Activated CD8-positive, alpha-beta T cell treated with anti-CD3 and anti-CD28 coated beads, Interleukin-2, amount 10 ng/mL, durations not matched to agents 7 days and 5 days (primary cell): ENCODE measurements at regions of chr1 and their contacts with region 1.

Region 1: DNA sequence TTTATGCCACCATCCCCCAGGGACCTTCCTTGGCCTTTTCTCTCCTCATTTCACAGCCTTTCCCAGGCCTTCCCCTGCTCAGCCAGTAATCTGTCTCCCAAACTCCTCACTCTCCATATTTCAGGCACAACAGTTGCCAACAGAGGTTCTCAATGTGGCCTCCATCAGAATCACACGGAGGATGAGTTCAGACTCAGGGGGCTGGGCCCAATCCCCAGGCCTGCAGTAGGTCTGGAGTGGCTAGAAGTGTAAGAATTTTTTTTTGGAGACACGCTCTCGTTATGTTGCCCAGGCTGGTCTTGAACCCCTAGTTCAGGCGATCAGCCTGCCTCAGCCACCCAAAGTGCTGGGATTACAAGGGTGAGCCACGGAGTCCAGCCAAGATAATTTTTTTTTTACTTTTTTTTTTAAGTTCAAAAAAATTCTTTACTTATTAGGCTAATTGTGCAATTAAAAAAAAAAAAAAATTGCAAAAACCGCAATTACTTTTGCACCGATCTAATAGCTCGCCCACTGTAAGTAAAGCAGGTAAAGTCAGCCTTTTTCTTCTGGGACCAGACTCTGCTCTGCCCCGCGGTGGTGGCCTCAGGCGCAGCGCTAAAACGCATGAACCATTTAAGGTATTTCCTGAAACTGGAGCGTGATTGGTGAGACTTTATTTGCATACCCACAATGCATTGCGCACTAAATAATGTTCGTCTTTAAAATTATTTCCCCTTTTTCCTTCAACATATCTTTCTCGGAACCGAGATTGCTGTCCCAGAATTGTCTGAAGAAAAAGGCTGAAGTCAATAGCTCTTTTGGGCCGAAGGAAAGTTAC is 18.7 kb downstream of the KIAA2013 start:
- DNase-seq: peak; percentile 94
- ATAC-seq: peak; percentile 47
- H3K4me3 Mint-ChIP-seq: peak overlapping the region; percentile 81
- H3K27ac Mint-ChIP-seq: peak overlapping the region; percentile 100
- H3K4me1 Mint-ChIP-seq: peaks cover 56% of the 10 kb centered on the region
- H3K27me3 Mint-ChIP-seq: peaks cover 5% of the 10 kb centered on the region

Region 2: DNA sequence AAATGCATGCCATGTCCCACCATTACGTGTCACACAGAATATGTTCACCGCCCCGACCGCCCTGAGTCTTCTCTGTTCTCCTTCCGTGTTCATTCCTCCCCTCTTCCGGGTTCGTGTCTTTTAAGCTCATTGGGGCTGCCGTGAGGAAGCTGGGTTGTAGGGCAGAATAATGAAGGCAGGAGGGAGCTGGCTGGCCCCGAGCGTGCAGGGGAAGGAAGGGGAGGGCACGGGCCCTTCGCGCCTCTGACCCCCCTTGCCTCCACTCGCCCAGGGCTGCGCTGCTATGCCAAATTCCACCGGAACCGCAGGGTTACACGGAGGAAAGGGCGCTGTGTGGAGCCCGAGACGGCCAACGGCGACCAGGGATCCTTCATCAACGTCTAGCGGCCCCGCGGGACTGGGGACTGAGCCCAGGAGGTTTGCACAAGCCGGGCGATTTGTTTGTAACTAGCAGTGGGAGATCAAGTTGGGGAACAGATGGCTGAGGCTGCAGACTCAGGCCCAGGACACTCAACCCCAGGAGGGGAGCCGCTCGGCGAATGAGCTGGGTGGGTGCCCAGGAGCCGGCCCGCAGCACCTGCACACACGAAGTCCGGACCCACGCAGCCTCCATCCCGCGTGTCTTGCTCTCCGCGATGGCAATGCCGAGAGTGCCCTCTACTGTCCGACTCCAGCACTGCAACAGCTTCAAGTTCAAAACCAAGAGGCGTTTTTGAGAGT is 188.0 kb before region 1 on chr1:
- CTCF ChIA-PET with region 1: no interaction called
- POLR2A ChIA-PET with region 1: interaction called, 20 read pairs
- DNase-seq: peak; percentile 91
- ATAC-seq: peak; percentile 95
- H3K4me3 Mint-ChIP-seq: peak overlapping the region; percentile 66
- H3K27ac Mint-ChIP-seq: peak overlapping the region; percentile 96
- H3K4me1 Mint-ChIP-seq: peaks cover 30% of the 10 kb centered on the region
- H3K27me3 Mint-ChIP-seq: no peaks in the 10 kb centered on the region

Region 3: DNA sequence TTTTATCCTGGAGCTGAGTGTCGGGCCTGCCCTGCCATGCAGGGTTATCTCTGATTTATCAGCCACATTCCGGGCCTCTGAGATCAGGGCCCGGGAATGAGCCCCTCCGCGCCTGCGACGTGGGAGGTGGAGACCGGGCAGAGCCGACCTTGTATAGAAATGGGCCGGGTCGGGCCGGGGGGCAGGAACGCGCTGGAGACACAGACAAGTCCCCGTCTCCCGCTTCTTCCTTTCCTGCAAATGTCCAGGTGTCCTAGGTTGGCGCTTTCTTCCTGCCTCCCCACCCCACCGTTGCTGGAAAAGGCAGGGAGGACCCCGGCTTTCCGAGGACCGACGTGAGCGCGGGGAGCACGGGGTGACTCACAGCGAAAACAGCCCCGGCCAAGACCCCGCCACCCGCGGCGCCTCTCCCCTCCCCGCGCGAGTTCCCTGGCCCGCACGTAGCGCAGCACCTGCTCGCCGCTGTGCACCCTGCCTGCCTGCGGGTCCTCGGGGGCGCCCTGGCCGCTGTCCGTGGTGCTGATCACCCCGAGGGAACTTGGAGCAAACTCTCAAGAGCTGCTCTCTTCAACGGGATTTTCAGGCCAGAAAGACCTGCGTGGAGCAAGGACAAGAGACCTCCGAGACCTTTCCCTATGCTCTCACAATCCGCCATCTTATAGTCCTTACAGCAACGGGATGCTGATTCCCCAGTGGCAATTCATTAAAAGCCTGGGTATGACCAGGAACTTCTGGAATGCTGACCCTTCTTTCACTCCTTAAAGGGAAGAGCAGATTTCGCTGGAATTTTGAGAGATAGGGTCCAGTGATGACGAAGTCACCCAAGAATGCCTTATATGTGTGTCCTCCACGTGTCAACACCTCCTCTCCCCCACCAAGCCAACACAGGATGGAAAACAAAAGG is 48.3 kb before region 1 on chr1:
- CTCF ChIA-PET with region 1: no interaction called
- POLR2A ChIA-PET with region 1: interaction called, 27 read pairs
- DNase-seq: peak; percentile 88
- ATAC-seq: peak; percentile 93
- H3K4me3 Mint-ChIP-seq: no peak overlapping the region
- H3K27ac Mint-ChIP-seq: no peak overlapping the region
- H3K4me1 Mint-ChIP-seq: peaks cover 16% of the 10 kb centered on the region
- H3K27me3 Mint-ChIP-seq: peaks cover 39% of the 10 kb centered on the region

Region 4: GRCh38 chr1:11925938-11926292 is 18.4 kb after region 1 on chr1:
- CTCF ChIA-PET with region 1: interaction called, 4 read pairs
- POLR2A ChIA-PET with region 1: interaction called, 259 read pairs
- DNase-seq: peak; percentile 31
- ATAC-seq: peak; percentile 45
- H3K4me3 Mint-ChIP-seq: peak overlapping the region; percentile 78
- H3K27ac Mint-ChIP-seq: no peak overlapping the region
- H3K4me1 Mint-ChIP-seq: peaks cover 44% of the 10 kb centered on the region
- H3K27me3 Mint-ChIP-seq: no peaks in the 10 kb centered on the region

Region 5: DNA sequence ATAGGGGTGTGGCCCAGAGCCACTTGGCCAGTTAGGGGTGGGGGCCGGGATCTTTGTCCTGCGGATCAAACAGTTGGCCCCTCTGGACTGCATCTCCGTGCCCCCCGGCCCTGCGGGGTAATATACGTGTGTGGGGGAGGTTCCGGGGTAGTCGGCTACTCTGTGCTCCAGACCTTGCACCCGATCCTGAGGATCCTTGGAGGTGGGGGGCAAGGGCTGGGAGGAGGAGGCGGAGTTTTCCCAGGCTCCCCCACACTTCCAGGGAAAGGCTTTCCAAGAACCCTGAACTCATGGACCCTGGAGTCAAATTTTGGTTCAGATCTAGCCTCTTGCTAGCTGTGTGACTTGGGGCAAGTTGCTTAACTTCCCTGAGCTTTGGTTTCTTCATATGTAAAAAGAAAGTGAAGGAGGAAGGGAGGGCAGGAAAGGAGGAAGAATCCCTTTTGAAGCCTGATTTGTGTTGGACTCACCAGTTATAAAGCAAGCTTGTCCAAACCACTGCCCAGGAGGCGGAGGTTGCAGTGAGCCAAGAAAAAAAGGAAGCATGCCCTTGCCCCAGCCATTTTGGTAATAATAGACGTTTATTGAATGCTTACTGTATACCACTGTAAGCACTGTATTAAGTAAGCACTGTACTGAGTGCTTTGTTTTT is 112.5 kb after region 1 on chr1:
- CTCF ChIA-PET with region 1: interaction called, 4 read pairs
- POLR2A ChIA-PET with region 1: interaction called, 87 read pairs
- DNase-seq: no peak
- ATAC-seq: peak; percentile 10
- H3K4me3 Mint-ChIP-seq: peak overlapping the region; percentile 83
- H3K27ac Mint-ChIP-seq: peak overlapping the region; percentile 87
- H3K4me1 Mint-ChIP-seq: peaks cover 14% of the 10 kb centered on the region
- H3K27me3 Mint-ChIP-seq: no peaks in the 10 kb centered on the region

Region 6: DNA sequence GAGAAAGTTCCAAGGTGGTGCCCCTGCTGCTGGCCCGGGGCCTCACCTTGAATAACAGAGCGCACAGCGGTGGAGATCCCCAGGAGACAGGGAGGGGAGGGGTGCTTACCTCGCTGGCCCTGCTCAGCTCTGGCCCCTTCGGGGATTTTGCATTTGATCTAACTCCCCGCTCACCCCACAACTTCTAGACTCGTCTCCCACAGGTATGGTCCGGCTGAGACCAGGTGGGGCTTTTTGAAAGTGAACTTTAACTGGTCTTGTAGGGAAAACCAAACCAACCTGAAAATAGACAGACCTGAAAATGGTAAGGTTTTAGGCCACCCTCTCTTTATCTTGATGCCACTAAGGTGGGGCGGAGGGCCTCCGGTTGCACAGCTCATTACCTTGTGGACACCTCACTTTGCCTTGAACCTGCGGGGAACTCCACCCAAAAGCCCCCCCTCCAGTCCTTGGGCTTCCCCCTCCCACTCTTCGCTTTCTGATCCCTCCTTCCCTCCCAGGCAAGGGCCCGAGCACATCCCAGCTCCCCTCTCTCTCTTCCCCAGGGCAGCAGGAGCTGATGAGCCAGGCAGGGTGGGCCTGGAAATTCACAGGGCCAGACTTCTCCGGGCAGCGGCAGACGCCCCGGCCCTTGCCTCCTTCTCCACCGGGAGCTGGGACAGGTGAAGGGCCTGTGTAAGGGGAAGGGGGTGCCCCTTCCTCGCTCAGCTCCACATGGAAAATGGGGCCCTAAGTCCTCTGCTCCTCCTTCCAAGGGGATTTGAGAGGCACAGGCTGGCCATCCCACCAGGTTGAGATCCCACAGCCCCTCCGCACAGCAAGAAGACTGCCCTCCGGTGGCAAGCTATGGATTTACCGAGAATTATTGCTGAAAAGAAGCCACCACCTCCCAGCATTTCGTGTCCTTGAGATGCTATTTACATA is 171.7 kb after region 1 on chr1:
- CTCF ChIA-PET with region 1: no interaction called
- POLR2A ChIA-PET with region 1: interaction called, 26 read pairs
- DNase-seq: peak; percentile 55
- ATAC-seq: no peak
- H3K4me3 Mint-ChIP-seq: no peak overlapping the region
- H3K27ac Mint-ChIP-seq: no peak overlapping the region
- H3K4me1 Mint-ChIP-seq: peaks cover 26% of the 10 kb centered on the region
- H3K27me3 Mint-ChIP-seq: peaks cover 23% of the 10 kb centered on the region

Region 7: DNA sequence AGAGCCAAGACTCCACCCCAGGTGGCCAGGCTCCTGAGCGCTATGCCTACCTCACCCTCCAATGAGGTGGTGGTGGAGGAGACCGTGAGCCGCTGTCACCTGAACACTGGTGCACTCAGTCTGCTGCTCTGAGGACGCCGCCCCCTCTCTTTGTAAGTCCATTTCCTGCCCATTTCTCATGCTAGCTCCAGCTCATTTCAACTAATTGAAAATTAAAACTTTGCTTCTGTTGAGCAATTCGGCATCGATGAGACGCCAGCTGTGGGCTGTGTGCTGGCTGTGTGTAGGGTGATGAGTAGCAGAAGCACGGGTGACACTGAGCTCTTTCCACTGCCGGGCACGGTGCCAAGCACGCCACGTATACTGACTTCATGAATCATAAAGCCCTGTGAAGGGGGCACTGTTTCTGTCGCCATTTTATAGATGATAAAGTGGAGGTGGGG is 270.5 kb after region 1 on chr1:
- CTCF ChIA-PET with region 1: no interaction called
- POLR2A ChIA-PET with region 1: interaction called, 19 read pairs
- DNase-seq: peak; percentile 86
- ATAC-seq: peak; percentile 61
- H3K4me3 Mint-ChIP-seq: peak overlapping the region; percentile 75
- H3K27ac Mint-ChIP-seq: peak overlapping the region; percentile 100
- H3K4me1 Mint-ChIP-seq: peaks cover 97% of the 10 kb centered on the region
- H3K27me3 Mint-ChIP-seq: no peaks in the 10 kb centered on the region